ENCODE measurements at regions of chr4 and their contacts with region 1.

Region 1: DNA sequence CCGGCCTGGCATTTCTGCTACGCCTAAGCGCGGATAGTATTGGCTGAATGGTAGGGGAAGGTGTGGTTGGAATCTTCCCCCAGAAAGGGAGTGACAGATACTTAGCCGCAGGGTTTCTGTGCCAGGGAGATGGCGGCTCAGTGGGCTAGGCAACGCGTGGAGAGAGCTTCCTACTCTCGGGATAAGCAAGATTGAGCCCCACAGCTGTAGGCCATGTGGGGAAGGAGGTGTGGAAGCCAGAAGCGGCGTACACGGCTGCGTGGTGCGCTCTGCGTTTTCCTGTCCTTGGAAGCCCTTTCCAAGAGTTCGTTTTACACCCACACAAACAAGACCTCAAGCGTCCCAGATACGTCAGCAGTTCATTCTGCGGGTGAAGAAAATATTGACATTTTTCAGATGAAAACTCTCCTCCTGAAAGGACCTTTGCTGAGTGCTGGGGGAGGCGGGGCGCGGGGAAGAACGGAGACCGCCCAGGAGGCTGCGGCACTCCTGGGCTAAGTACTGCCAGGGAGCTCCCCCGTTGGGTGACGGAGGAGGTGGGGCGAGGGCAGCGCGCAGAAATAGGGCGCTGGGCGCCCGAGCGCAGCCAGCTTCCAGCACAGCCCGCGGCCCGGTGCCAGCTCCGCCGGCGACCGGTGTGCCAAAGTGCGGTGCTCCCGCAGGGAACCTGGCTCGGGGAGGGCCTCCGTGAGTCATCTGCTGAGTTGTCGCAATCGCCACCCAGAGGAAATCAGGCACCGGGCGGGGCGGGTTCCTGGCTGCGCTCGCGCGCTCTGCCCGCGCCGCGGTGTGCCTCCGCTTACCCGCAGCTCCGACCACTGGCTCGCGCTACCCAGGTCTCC is at the start of gene GPAT3:
- DNase-seq: peak; percentile 81 to 88 (median 85)
- H3K4me3 ChIP-seq: peak within 1 kb of the TSS; percentile 69
- H3K27ac ChIP-seq: peak within 1 kb of the TSS; percentile 83 to 88
- H3K4me1 ChIP-seq: peaks cover 4% of the 10 kb centered on the region
- H3K27me3 ChIP-seq: no peaks in the 10 kb centered on the region
- CTCF ChIP-seq: no peak
- EP300 ChIP-seq: no peak
- POLR2A ChIP-seq: peak; percentile 54
- total RNA-seq, gene GPAT3: 9.0 to 23.1 (median 14.9) TPM

Region 2: GRCh38 chr4:83484500-83485461 is 51.0 kb before region 1 on chr4 and contains the start of gene ABRAXAS1:
- intact Hi-C with region 1: loop called in 1 of 4 experiments (anchors 10 kb)
- DNase-seq: peak; percentile 94 to 96 (median 95)
- H3K4me3 ChIP-seq: peak within 1 kb of the TSS; percentile 74
- H3K27ac ChIP-seq: peak within 1 kb of the TSS; percentile 56 to 92
- H3K4me1 ChIP-seq: peaks cover 2% of the 10 kb centered on the region
- H3K27me3 ChIP-seq: no peaks in the 10 kb centered on the region
- CTCF ChIP-seq: no peak
- EP300 ChIP-seq: no peak
- POLR2A ChIP-seq: peak; percentile 87
- total RNA-seq, gene ABRAXAS1: 14.5 to 43.1 (median 33.8) TPM

Measured in ovary (tissue), 10 donors.